ENCODE measurements at regions of chr5 and their contacts with region 1.

Region 1: GRCh38 chr5:153964880-153965645 is 73.6 kb downstream of the FAM114A2 start:
- DNase-seq: peak; percentile 70
- ATAC-seq: peak; percentile 85
- H3K4me3 Mint-ChIP-seq: peak overlapping the region; percentile 69
- H3K27ac Mint-ChIP-seq: no peak overlapping the region
- H3K4me1 Mint-ChIP-seq: peaks cover 15% of the 10 kb centered on the region
- H3K27me3 Mint-ChIP-seq: no peaks in the 10 kb centered on the region; the same call in 1 of the 2 replicates
- CTCF ChIP-seq: peak; percentile 85

Region 2: GRCh38 chr5:152532714-152533113 is 1432.3 kb before region 1 on chr5:
- CTCF ChIA-PET with region 1: interaction called, 18 read pairs
- POLR2A ChIA-PET with region 1: interaction called, 4 read pairs
- DNase-seq: no peak
- ATAC-seq: peak; percentile 32
- H3K4me3 Mint-ChIP-seq: no peak overlapping the region
- H3K27ac Mint-ChIP-seq: no peak overlapping the region
- H3K4me1 Mint-ChIP-seq: peaks cover 36% of the 10 kb centered on the region
- H3K27me3 Mint-ChIP-seq: no peaks in the 10 kb centered on the region
- CTCF ChIP-seq: 0 out of 2 replicates have a peak, but pooled peaks have one; percentile 19

Region 3: DNA sequence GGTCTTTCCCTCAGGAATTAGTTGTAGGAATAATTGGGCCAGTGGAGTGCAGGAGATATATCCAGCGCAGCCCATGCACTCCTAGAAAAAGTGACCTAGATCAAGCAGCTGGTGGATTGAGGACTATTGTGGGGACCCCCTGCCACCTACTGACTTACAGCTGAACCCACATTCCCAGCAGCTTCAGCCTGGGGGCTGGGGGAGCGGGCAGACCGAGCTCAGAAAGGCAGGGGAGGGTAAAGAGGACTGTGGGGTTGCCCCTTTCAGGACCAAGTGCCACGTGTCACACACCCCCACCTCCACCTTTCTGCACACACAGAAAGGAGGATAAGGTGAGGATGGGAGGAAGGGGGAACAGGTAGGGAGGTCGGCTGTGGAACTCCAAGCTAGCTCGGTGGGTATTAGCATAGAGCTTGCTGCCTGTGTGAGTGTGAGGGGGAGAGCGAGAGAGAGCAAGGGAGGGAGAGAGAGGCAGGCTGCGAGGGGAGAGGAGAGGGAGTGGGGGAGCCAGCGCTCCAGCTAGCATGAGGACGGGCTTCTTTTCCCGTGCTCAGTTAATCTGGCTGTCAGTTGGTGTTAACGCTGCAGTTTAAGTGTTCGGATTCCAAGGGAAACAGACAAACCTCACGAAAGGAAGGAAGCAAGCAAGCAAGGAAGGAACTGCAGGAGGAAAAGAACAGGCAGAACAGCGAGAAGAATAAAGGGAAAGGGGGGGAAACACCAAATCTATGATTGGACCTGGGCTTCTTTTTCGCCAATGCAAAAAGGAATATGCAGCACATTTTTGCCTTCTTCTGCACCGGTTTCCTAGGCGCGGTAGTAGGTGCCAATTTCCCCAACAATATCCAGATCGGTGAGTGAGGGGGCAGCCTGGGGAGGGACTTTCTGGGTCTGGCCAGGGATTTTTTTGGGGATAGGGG is 474.7 kb before region 1 on chr5 and contains the start of gene GRIA1:
- CTCF ChIA-PET with region 1: interaction called, 14 read pairs
- POLR2A ChIA-PET with region 1: no interaction called
- DNase-seq: peak; percentile 43
- ATAC-seq: peak; percentile 96
- H3K4me3 Mint-ChIP-seq: peak within 1 kb of the TSS; percentile 78
- H3K27ac Mint-ChIP-seq: no peak within 1 kb of the TSS
- H3K4me1 Mint-ChIP-seq: peaks cover 24% of the 10 kb centered on the region
- H3K27me3 Mint-ChIP-seq: peaks cover 27% of the 10 kb centered on the region
- CTCF ChIP-seq: no peak
- total RNA-seq, gene GRIA1: 0.76 to 0.81 TPM (median 0.76 TPM) in 3 replicates

Region 4: DNA sequence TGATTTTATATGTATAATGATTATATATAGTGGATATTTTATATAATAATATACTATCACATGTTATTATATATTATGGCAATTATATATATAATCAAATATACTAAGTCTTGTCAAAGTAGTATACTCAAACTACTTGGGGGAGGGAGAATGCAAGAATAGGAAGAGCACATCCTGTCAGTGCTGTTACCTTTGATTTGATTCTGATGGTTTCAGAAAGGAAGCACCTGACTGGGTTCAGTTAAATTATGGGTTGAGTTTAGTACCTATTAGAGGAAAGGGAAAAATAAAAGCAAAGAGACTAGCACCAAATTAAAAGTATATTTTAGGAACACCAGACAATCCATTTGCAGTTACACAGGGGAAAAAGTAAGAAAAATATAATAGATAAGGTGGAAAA is 367.0 kb before region 1 on chr5:
- CTCF ChIA-PET with region 1: no interaction called
- POLR2A ChIA-PET with region 1: no interaction called
- DNase-seq: no peak
- ATAC-seq: no peak
- H3K4me3 Mint-ChIP-seq: no peak overlapping the region
- H3K27ac Mint-ChIP-seq: no peak overlapping the region
- H3K4me1 Mint-ChIP-seq: no peaks in the 10 kb centered on the region
- H3K27me3 Mint-ChIP-seq: no peaks in the 10 kb centered on the region
- CTCF ChIP-seq: no peak

Region 5: GRCh38 chr5:153782589-153783361 is 182.3 kb before region 1 on chr5:
- CTCF ChIA-PET with region 1: interaction called, 23 read pairs
- POLR2A ChIA-PET with region 1: no interaction called
- DNase-seq: peak; percentile 24
- ATAC-seq: peak; percentile 85
- H3K4me3 Mint-ChIP-seq: no peak overlapping the region
- H3K27ac Mint-ChIP-seq: peak overlapping the region; percentile 80; the same call in 1 of the 2 replicates
- H3K4me1 Mint-ChIP-seq: peaks cover 46% of the 10 kb centered on the region
- H3K27me3 Mint-ChIP-seq: no peaks in the 10 kb centered on the region
- CTCF ChIP-seq: no peak

Region 6: GRCh38 chr5:153827397-153827796 is 137.7 kb before region 1 on chr5:
- CTCF ChIA-PET with region 1: interaction called, 56 read pairs
- POLR2A ChIA-PET with region 1: interaction called, 4 read pairs
- DNase-seq: peak; percentile 42
- ATAC-seq: peak; percentile 40
- H3K4me3 Mint-ChIP-seq: no peak overlapping the region
- H3K27ac Mint-ChIP-seq: no peak overlapping the region
- H3K4me1 Mint-ChIP-seq: peaks cover 33% of the 10 kb centered on the region
- H3K27me3 Mint-ChIP-seq: 0 out of 2 replicates have a peak, but pooled peaks cover 4% of the 10 kb centered on the region
- CTCF ChIP-seq: no peak